ENCODE measurements at regions of chr12 and their contacts with region 1.

Region 1: GRCh38 chr12:104358347-104359003 is 54.9 kb downstream of the EID3 start:
- DNase-seq: peak; percentile 33 to 73 (median 63)
- ATAC-seq: peak; percentile 97
- H3K4me3 ChIP-seq: no peak overlapping the region
- H3K4me3 Mint-ChIP-seq: no peak overlapping the region
- H3K27ac ChIP-seq: no peak overlapping the region
- H3K27ac Mint-ChIP-seq: no peak overlapping the region
- H3K4me1 ChIP-seq: no peaks in the 10 kb centered on the region
- H3K4me1 Mint-ChIP-seq: peaks cover 0 to 13% (median 0%) of the 10 kb centered on the region in 7 donors
- H3K27me3 ChIP-seq: no peaks in the 10 kb centered on the region
- H3K27me3 Mint-ChIP-seq: no peaks in the 10 kb centered on the region

Region 2: DNA sequence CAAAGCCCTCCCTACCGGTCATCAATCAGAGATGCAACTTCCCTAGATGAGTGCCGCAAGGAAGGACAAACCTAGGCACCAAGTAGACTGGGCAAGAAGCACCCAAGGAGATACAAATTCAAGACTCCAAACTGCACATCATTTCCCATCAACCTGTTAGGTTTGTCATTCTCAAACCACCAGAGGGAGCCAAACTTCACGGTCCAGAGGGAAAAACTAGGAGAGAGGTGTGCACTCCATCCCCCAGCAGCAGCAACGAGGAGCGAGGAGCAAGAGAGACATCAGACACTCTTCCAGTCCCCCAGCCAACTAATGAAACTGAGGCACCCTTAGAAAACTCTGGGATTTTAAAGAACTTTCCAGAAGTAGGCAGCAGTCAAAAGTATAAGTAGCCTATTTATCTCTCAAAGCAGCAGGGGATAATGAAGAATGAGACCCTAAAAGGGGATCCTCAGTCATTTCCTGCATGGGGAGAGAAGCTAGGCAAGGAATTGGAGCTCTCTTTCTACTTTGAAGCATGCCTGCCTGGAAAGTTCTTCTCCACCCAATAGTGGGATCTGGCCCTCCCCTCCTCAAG is 480.5 kb before region 1 on chr12:
- CTCF ChIA-PET with region 1: no interaction called
- POLR2A ChIA-PET with region 1: no interaction called
- intact Hi-C with region 1: loop called in 1 of 2 experiments (anchors 5 kb)
- DNase-seq: peak in 8 of 9 donors; percentile 43 to 61 (median 54)
- ATAC-seq: peak; percentile 83
- H3K4me3 ChIP-seq: no peak overlapping the region
- H3K4me3 Mint-ChIP-seq: peak overlapping the region in 1 of 10 donors; percentile 8
- H3K27ac ChIP-seq: no peak overlapping the region
- H3K27ac Mint-ChIP-seq: peak overlapping the region in 3 of 9 donors; percentile 2 to 80 (median 23)
- H3K4me1 ChIP-seq: no peaks in the 10 kb centered on the region
- H3K4me1 Mint-ChIP-seq: peaks cover 0 to 28% (median 12%) of the 10 kb centered on the region in 7 donors
- H3K27me3 ChIP-seq: no peaks in the 10 kb centered on the region
- H3K27me3 Mint-ChIP-seq: peaks cover 0 to 5% (median 0%) of the 10 kb centered on the region in 5 donors

Region 3: GRCh38 chr12:104057771-104058197 is 300.7 kb before region 1 on chr12:
- CTCF ChIA-PET with region 1: no interaction called
- POLR2A ChIA-PET with region 1: no interaction called
- intact Hi-C with region 1: loop called in 1 of 2 experiments (anchors 2 kb)
- DNase-seq: peak in 5 of 9 donors; percentile 1 to 16 (median 13)
- ATAC-seq: peak; percentile 60
- H3K4me3 ChIP-seq: no peak overlapping the region
- H3K4me3 Mint-ChIP-seq: no peak overlapping the region
- H3K27ac ChIP-seq: no peak overlapping the region
- H3K27ac Mint-ChIP-seq: no peak overlapping the region
- H3K4me1 ChIP-seq: no peaks in the 10 kb centered on the region
- H3K4me1 Mint-ChIP-seq: no peaks in the 10 kb centered on the region
- H3K27me3 ChIP-seq: no peaks in the 10 kb centered on the region
- H3K27me3 Mint-ChIP-seq: peaks cover 31 to 70% (median 39%) of the 10 kb centered on the region in 5 donors

Region 4: DNA sequence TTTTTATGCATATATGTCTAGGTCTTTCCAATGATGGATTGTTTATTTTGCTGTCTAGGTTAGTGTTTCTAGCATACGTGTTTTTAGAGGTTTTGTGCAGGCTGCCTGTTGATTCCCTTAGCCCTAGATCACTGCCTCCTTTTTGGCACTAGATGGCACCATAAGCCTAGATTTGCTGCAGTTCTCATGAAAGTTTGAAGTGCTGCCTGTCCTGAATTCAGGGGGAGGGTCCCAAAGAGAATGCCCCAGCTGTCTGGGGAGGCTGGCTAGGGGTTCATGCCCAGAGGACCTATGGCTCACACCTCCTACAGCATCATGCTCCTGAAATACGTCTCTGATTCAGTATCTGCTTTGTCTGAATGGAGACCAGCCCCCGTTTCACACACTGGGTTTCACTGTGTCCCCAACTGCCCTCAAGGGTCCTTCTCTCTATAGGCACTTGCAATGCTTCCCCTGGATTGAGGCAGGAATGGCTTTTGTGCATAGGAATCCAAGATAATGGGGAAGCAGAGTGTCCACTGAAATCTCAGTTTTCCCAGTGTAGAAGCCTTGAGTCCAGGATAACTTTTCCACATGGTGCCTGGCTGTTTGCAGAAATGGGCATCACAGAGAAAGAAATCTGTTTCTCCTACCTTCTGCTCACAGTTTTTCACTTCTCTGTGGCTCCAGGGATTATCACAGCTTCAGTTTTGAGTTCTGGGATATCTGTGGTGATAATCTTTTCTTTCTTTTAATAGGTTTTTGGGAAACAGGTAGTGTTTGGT is 157.1 kb before region 1 on chr12:
- CTCF ChIA-PET with region 1: interaction called, 8 read pairs
- POLR2A ChIA-PET with region 1: no interaction called
- intact Hi-C with region 1: loop called (anchors 1 kb)
- DNase-seq: peak; percentile 8 to 72 (median 59)
- ATAC-seq: peak; percentile 78
- H3K4me3 ChIP-seq: no peak overlapping the region
- H3K4me3 Mint-ChIP-seq: peak overlapping the region in 1 of 10 donors; percentile 54
- H3K27ac ChIP-seq: no peak overlapping the region
- H3K27ac Mint-ChIP-seq: no peak overlapping the region
- H3K4me1 ChIP-seq: no peaks in the 10 kb centered on the region
- H3K4me1 Mint-ChIP-seq: peaks cover 0 to 4% (median 3%) of the 10 kb centered on the region in 7 donors
- H3K27me3 ChIP-seq: no peaks in the 10 kb centered on the region
- H3K27me3 Mint-ChIP-seq: peaks cover 5 to 24% (median 9%) of the 10 kb centered on the region in 5 donors

Region 5: DNA sequence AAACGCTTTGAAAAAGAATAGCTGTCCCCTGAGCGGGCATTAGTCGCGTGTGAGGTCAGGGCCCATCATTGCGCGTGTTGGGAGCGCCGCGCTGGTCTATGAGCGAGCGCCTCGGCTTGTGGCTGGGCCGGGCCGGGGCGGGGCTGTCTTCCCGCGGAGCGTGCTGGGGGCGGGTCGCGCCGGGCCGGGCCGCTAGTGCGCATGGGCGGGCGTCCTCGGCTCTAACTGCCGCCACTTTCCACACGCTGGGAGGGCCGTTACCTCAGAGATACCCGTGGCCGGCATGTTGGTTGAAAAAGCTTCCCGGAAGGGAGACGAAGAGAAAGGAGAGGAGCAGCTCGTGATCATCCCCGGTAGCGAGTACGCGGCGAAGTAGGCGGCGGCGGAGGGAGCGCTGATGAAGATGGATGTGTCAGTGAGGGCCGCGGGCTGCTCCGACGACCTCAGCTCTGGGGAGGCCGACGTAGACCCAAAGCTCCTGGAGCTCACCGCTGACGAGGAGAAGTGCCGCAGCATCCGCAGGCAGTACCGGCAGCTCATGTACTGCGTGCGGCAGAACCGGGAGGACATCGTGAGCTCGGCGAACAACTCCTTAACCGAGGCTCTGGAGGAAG is 54.8 kb before region 1 on chr12 and contains the start of gene EID3:
- CTCF ChIA-PET with region 1: interaction called, 4 read pairs
- POLR2A ChIA-PET with region 1: no interaction called
- intact Hi-C with region 1: loop called in 1 of 2 experiments (anchors 1 kb)
- DNase-seq: peak; percentile 86 to 96 (median 91)
- ATAC-seq: peak; percentile 99
- H3K4me3 ChIP-seq: peak within 1 kb of the TSS; percentile 56
- H3K4me3 Mint-ChIP-seq: peak within 1 kb of the TSS; percentile 87 to 99 (median 96)
- H3K27ac ChIP-seq: peak within 1 kb of the TSS; percentile 84
- H3K27ac Mint-ChIP-seq: peak within 1 kb of the TSS; percentile 91 to 99 (median 97)
- H3K4me1 ChIP-seq: peaks cover 7 to 24% of the 10 kb centered on the region in 2 donors
- H3K4me1 Mint-ChIP-seq: peaks cover 35 to 72% (median 56%) of the 10 kb centered on the region in 7 donors
- H3K27me3 ChIP-seq: no peaks in the 10 kb centered on the region
- H3K27me3 Mint-ChIP-seq: no peaks in the 10 kb centered on the region
- total RNA-seq, gene EID3: 8.2 to 11.8 (median 10.4) TPM